Adrenal gland (tissue), 19 donors: ENCODE measurements at regions of chr18 and their contacts with region 1.

Region 1: GRCh38 chr18:79246348-79247108 is 149.2 kb upstream of the NFATC1 start:
- DNase-seq: peak; percentile 70 to 88 (median 77)
- H3K4me3 ChIP-seq: no peak overlapping the region
- H3K27ac ChIP-seq: no peak overlapping the region
- H3K4me1 ChIP-seq: peaks cover 0 to 8% of the 10 kb centered on the region in 2 donors
- H3K27me3 ChIP-seq: no peaks in the 10 kb centered on the region
- CTCF ChIP-seq: peak; percentile 84 to 98 (median 93)
- POLR2A ChIP-seq: no peak

Region 2: GRCh38 chr18:78875268-78875997 is 371.1 kb before region 1 on chr18:
- intact Hi-C with region 1: loop called in 1 of 2 experiments (anchors 5 kb)
- DNase-seq: peak; percentile 35 to 66 (median 48)
- H3K4me3 ChIP-seq: no peak overlapping the region
- H3K27ac ChIP-seq: no peak overlapping the region
- H3K4me1 ChIP-seq: no peaks in the 10 kb centered on the region
- H3K27me3 ChIP-seq: peaks cover 13% of the 10 kb centered on the region
- CTCF ChIP-seq: peak; percentile 27 to 59 (median 52)
- POLR2A ChIP-seq: no peak

Region 3: GRCh38 chr18:78974115-78975018 is 272.2 kb before region 1 on chr18:
- intact Hi-C with region 1: no loop called
- DNase-seq: no peak
- H3K4me3 ChIP-seq: no peak overlapping the region
- H3K27ac ChIP-seq: no peak overlapping the region
- H3K4me1 ChIP-seq: peaks cover 0 to 22% of the 10 kb centered on the region in 2 donors
- H3K27me3 ChIP-seq: peaks cover 80% of the 10 kb centered on the region
- CTCF ChIP-seq: no peak
- POLR2A ChIP-seq: no peak

Region 4: DNA sequence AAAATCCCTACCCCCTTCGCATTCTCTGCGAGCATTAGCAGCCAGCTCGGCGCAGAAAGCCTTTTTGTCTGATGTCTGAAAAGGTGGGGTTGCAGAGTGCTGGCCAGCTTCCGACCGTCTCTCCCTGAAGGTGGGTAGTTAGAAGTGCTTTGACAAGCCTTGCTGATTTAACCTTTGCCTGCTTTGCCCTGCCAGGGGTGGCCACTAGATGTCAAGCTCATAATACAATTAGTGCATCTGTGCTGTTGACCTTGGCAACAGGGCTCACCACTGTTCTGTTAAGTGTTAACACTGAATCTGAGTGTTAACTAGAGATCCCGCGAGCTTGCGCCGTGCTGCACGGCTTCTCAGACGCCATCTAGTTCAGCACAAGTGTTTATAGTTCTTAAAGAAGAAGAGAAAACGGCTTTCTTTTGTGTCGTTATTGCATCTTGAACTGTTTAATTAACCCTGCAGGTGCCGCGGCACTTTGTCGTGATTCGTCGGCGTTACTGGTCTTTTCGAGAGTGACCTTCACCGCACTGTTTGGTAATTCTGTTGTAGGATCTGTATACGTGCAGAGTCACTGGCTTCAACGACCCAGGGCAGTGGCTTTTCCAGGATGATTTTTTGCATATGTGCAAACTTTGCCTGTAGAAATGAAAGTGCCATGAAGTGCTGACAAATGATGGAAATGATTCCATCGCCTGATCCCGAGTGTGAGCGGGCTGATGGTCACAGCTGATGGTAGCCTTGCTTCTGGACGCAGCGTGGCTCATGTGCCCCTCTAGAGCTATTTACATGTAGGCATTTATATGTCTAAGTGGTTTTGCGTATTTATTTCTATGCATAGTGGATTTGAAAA is 261.4 kb before region 1 on chr18:
- intact Hi-C with region 1: loop called in 1 of 2 experiments (anchors 5 kb)
- DNase-seq: peak in 6 of 7 donors; percentile 31 to 57 (median 38)
- H3K4me3 ChIP-seq: no peak overlapping the region
- H3K27ac ChIP-seq: no peak overlapping the region
- H3K4me1 ChIP-seq: peaks cover 0 to 9% of the 10 kb centered on the region in 2 donors
- H3K27me3 ChIP-seq: peaks cover 83% of the 10 kb centered on the region
- CTCF ChIP-seq: peak in 5 of 6 experiments; percentile 26 to 44 (median 38)
- POLR2A ChIP-seq: no peak

Region 5: DNA sequence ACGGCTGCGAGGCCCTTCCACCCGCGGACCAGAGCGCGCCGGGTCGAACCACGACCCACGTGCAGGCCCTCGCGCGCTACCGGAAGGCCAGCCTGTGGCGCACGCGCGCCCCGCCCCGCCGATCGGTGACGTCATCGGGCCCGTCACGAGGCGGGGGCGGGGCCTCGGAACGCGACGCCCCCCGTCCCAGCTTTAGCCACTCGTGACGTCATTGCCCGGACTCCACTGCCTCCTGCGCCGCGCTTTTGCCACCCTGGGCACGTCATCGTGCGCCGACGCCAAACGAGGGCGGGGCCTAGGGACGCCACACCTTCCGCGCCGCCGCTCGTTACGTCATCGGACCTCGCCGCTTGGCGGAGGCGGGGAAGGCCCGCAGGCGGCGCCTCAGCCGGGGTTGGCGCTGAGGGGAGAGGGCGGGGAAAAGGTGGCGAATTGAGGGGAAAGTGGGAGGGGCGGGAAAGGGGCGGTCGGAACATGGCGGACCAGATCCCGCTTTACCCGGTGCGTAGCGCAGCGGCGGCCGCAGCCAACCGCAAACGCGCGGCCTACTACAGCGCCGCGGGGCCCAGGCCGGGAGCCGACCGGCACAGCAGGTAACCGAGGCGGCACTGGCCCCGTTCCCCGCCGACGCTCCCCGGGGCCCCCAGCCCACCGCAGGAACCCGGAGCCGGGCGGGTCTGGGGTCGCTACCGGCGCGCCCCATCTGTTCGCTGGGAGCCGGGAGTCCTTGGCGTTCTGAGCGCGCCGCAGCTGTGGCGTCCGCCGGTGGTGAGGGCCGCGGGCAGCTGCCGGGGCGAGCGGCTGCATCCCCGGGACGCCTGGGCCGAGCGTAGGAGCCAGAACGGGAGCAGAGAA is 177.4 kb before region 1 on chr18 and contains the start of gene ATP9B:
- intact Hi-C with region 1: loop called in 1 of 2 experiments (anchors 10 kb)
- DNase-seq: peak; percentile 97 to 99 (median 97)
- H3K4me3 ChIP-seq: peak within 1 kb of the TSS; percentile 30 to 88 (median 78)
- H3K27ac ChIP-seq: peak within 1 kb of the TSS; percentile 76 to 98 (median 92)
- H3K4me1 ChIP-seq: peaks cover 12 to 22% of the 10 kb centered on the region in 2 donors
- H3K27me3 ChIP-seq: no peaks in the 10 kb centered on the region
- CTCF ChIP-seq: peak in 4 of 6 experiments; percentile 10 to 52 (median 24)
- POLR2A ChIP-seq: peak; percentile 66 to 83
- total RNA-seq, gene ATP9B: 20.1 to 36.0 (median 29.3) TPM